ENCODE measurements at regions of chr2 and their contacts with region 1.

Region 1: GRCh38 chr2:108637304-108637669 is 82.0 kb upstream of the RANBP2 start:
- DNase-seq: peak in 1 of 2 donors; percentile 80
- ATAC-seq: peak; percentile 88 to 95 (median 92)
- H3K4me3 ChIP-seq: peak overlapping the region in 1 of 10 donors; percentile 3
- H3K27ac ChIP-seq: peak overlapping the region; percentile 64 to 91 (median 86)
- H3K4me1 ChIP-seq: peaks cover 6 to 98% (median 82%) of the 10 kb centered on the region in 9 donors
- H3K27me3 ChIP-seq: no peaks in the 10 kb centered on the region
- CTCF ChIP-seq: no peak

Region 2: GRCh38 chr2:108533832-108534583 is 103.3 kb before region 1 on chr2 and contains the start of gene LIMS1:
- intact Hi-C with region 1: loop called in 1 of 10 experiments (anchors 10 kb)
- DNase-seq: peak; percentile 93 to 95
- ATAC-seq: peak; percentile 96 to 99 (median 97)
- H3K4me3 ChIP-seq: peak within 1 kb of the TSS; percentile 62 to 87 (median 76)
- H3K27ac ChIP-seq: peak within 1 kb of the TSS; percentile 73 to 96 (median 89)
- H3K4me1 ChIP-seq: peaks cover 4 to 31% (median 26%) of the 10 kb centered on the region in 9 donors
- H3K27me3 ChIP-seq: no peaks in the 10 kb centered on the region
- CTCF ChIP-seq: peak in 1 of 9 donors; percentile 28
- total RNA-seq, gene LIMS1: 69.7 to 122 (median 78.9) TPM

Region 3: GRCh38 chr2:108594132-108594981 is 42.9 kb before region 1 on chr2:
- intact Hi-C with region 1: loop called in 2 of 10 experiments (anchors 5 kb)
- DNase-seq: no peak
- ATAC-seq: peak; percentile 44 to 79 (median 57)
- H3K4me3 ChIP-seq: no peak overlapping the region
- H3K27ac ChIP-seq: peak overlapping the region; percentile 5 to 88 (median 63)
- H3K4me1 ChIP-seq: peaks cover 16 to 84% (median 59%) of the 10 kb centered on the region in 9 donors
- H3K27me3 ChIP-seq: no peaks in the 10 kb centered on the region
- CTCF ChIP-seq: no peak

Region 4: DNA sequence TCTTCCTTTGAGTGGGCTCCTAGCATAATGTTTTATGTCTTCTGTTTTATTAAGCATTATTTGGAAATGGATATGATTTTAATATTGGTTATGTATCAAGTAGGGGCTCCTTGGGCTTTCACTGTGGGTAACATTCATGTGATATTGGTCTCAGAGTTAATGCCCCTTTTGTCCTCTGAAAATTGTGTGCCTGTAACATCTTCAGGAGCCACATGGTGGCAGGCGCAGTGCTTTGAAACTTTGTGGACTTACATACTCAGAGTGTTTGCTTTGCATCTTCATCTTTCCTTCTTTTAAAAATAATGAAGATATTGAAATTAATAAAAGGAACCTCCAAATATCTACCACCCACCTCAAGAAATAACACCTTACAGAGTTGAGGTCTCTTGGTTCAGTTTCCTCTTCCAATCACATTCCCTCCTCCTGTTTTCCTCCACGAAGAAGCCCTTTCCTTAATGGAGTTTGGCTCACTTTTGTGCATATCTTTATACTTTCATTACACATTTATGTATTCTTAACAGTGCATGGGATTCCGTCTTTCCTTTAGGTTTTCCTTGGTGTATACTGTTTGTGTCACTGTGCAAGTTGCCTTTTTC is 29.5 kb before region 1 on chr2:
- intact Hi-C with region 1: loop called in 4 of 10 experiments (anchors 2 to 5 kb)
- DNase-seq: no peak
- ATAC-seq: peak in 6 of 8 donors; percentile 48 to 70 (median 60)
- H3K4me3 ChIP-seq: no peak overlapping the region
- H3K27ac ChIP-seq: peak overlapping the region in 7 of 10 donors; percentile 40 to 66 (median 59)
- H3K4me1 ChIP-seq: peaks cover 0 to 51% (median 34%) of the 10 kb centered on the region in 9 donors
- H3K27me3 ChIP-seq: no peaks in the 10 kb centered on the region
- CTCF ChIP-seq: peak; percentile 21 to 77 (median 61)

Region 5: DNA sequence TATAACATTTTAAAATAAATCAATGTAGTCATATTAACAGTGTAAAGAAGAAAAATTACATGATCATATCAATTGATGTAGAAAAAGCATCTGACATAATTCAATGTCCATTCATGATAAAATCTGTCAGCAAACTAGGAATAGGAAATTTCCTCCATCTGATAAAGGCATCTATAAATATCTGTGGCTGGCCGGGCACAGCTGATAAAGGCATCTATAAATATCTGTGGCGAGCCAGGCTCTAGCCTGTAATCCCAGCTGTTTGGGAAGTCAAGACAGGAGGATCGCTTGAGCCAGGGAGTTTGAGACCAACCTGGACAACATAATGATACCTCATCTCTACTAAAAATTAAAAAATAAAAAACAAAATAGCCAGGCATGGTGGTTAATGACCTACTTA is 63.9 kb after region 1 on chr2:
- intact Hi-C with region 1: no loop called
- DNase-seq: no peak
- ATAC-seq: peak in 2 of 8 donors; percentile 54 to 84
- H3K4me3 ChIP-seq: no peak overlapping the region
- H3K27ac ChIP-seq: no peak overlapping the region
- H3K4me1 ChIP-seq: peaks cover 0 to 10% (median 7%) of the 10 kb centered on the region in 9 donors
- H3K27me3 ChIP-seq: no peaks in the 10 kb centered on the region
- CTCF ChIP-seq: no peak

Measured in heart right ventricle (tissue), 16 donors.